CD8-positive, alpha-beta T cell (primary cell): ENCODE measurements at regions of chr7 and their contacts with region 1.

Region 1: DNA sequence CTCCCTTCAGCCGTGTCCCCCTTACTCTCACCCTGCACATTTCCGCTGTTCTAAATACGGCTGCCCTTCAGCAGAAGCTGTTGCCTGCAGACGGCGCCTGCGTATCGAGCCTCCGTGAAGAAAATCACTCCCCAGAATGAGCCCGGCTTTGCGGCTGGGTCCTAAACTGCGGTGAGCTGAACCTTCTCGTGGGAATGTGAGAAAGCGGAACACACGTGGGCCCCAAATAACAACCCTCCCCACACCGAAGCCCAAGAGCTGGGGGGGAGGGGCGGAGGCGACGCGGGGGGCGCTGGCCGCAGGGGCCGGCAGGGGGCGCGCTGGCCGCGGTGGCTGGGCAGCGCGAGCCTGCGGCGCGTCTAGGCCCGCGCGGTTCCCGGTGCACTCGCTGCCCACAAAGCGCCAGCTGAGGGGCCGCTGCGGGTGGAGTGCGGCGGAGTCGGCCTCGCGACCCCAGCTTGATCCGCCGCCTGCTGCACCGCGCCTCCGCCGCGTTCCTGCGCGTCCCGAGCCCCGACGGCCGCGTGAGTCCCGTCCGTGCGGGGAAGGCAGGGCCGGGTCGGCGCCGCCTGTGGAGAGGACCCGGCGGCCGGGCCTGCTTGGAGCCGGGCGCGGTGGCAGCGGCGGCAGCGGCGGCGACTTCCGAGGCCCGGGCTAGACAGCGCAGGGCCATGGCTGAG is at the start of gene ZNF398:
- DNase-seq: peak; percentile 69 to 92 (median 79)
- ATAC-seq: peak; percentile 78
- H3K4me3 ChIP-seq: peak within 1 kb of the TSS; percentile 66 to 100
- H3K4me3 Mint-ChIP-seq: peak within 1 kb of the TSS; percentile 89
- H3K27ac ChIP-seq: peak within 1 kb of the TSS; percentile 70 to 77
- H3K27ac Mint-ChIP-seq: peak within 1 kb of the TSS; percentile 91
- H3K4me1 ChIP-seq: peaks cover 22% of the 10 kb centered on the region
- H3K4me1 Mint-ChIP-seq: peaks cover 35% of the 10 kb centered on the region
- H3K27me3 ChIP-seq: no peaks in the 10 kb centered on the region
- H3K27me3 Mint-ChIP-seq: no peaks in the 10 kb centered on the region
- CTCF ChIP-seq: peak; percentile 55
- total RNA-seq, gene ZNF398: 12.9 to 15.1 TPM

Region 2: DNA sequence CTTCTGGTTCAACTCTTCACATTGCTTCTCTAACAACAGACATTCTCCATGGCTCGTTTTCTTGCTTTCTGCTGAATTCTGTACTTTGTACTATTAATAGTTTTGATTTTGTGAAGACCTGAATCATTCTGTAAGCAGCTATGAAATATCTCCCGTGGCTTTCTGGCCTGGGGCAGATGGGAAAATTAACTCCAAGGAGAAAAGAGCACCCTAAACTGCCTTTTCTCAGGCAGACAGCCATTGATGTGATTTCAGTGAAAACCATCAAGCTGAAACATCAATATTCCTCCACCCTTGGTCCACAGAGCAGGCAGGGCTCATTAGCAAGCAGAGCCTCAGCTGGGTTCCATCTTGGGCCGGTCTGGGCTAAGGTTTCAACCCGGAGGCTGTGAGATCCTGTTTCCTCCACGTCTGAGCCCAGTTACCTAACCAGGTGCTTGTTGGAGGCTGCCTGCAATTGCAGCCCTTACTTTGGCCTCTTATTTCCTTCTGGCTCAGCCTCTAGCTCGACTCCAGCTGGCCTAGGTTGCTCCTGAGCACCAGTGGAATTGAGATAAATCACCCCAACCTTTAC is 242.0 kb before region 1 on chr7:
- CTCF ChIA-PET with region 1: no interaction called
- POLR2A ChIA-PET with region 1: no interaction called
- intact Hi-C with region 1: no loop called
- DNase-seq: peak in 1 of 9 experiments; percentile 29
- ATAC-seq: no peak
- H3K4me3 ChIP-seq: no peak overlapping the region
- H3K4me3 Mint-ChIP-seq: no peak overlapping the region
- H3K27ac ChIP-seq: no peak overlapping the region
- H3K27ac Mint-ChIP-seq: no peak overlapping the region
- H3K4me1 ChIP-seq: no peaks in the 10 kb centered on the region
- H3K4me1 Mint-ChIP-seq: no peaks in the 10 kb centered on the region
- H3K27me3 ChIP-seq: no peaks in the 10 kb centered on the region
- H3K27me3 Mint-ChIP-seq: no peaks in the 10 kb centered on the region
- CTCF ChIP-seq: no peak

Region 3: GRCh38 chr7:148987010-148987750 is 160.0 kb before region 1 on chr7:
- CTCF ChIA-PET with region 1: no interaction called
- POLR2A ChIA-PET with region 1: no interaction called
- intact Hi-C with region 1: loop called (anchors 1 to 5 kb)
- DNase-seq: peak; percentile 43 to 93 (median 80)
- ATAC-seq: peak; percentile 76
- H3K4me3 ChIP-seq: peak overlapping the region; percentile 82 to 97
- H3K4me3 Mint-ChIP-seq: peak overlapping the region; percentile 96
- H3K27ac ChIP-seq: peak overlapping the region; percentile 74 to 93
- H3K27ac Mint-ChIP-seq: peak overlapping the region; percentile 96
- H3K4me1 ChIP-seq: peaks cover 41% of the 10 kb centered on the region
- H3K4me1 Mint-ChIP-seq: peaks cover 52% of the 10 kb centered on the region
- H3K27me3 ChIP-seq: no peaks in the 10 kb centered on the region
- H3K27me3 Mint-ChIP-seq: no peaks in the 10 kb centered on the region
- CTCF ChIP-seq: no peak

Region 4: DNA sequence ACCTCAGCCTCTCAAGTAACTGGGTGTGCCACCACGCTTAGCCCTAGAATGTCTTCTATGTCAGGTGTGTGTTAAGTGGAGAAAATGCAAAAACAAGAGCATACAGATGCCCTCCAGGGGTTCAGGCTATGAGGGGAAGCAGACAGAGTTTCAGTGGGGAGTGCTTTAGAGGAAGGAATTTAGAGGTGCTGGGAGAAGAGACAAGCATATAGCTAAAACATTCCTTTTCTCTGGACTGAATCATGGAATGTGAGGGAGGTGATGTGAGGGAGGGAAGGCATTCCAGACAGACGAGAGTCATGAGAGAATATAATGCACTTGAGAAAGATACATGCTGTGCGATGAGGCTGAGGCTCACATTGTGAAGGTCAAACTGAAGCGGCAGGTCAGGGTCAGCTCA is 50.1 kb before region 1 on chr7:
- CTCF ChIA-PET with region 1: no interaction called
- POLR2A ChIA-PET with region 1: interaction called, 3 read pairs
- intact Hi-C with region 1: loop called in 1 of 2 experiments (anchors 2 kb)
- DNase-seq: no peak
- ATAC-seq: no peak
- H3K4me3 ChIP-seq: no peak overlapping the region
- H3K4me3 Mint-ChIP-seq: no peak overlapping the region
- H3K27ac ChIP-seq: no peak overlapping the region
- H3K27ac Mint-ChIP-seq: no peak overlapping the region
- H3K4me1 ChIP-seq: no peaks in the 10 kb centered on the region
- H3K4me1 Mint-ChIP-seq: no peaks in the 10 kb centered on the region
- H3K27me3 ChIP-seq: no peaks in the 10 kb centered on the region
- H3K27me3 Mint-ChIP-seq: no peaks in the 10 kb centered on the region
- CTCF ChIP-seq: no peak

Region 5: DNA sequence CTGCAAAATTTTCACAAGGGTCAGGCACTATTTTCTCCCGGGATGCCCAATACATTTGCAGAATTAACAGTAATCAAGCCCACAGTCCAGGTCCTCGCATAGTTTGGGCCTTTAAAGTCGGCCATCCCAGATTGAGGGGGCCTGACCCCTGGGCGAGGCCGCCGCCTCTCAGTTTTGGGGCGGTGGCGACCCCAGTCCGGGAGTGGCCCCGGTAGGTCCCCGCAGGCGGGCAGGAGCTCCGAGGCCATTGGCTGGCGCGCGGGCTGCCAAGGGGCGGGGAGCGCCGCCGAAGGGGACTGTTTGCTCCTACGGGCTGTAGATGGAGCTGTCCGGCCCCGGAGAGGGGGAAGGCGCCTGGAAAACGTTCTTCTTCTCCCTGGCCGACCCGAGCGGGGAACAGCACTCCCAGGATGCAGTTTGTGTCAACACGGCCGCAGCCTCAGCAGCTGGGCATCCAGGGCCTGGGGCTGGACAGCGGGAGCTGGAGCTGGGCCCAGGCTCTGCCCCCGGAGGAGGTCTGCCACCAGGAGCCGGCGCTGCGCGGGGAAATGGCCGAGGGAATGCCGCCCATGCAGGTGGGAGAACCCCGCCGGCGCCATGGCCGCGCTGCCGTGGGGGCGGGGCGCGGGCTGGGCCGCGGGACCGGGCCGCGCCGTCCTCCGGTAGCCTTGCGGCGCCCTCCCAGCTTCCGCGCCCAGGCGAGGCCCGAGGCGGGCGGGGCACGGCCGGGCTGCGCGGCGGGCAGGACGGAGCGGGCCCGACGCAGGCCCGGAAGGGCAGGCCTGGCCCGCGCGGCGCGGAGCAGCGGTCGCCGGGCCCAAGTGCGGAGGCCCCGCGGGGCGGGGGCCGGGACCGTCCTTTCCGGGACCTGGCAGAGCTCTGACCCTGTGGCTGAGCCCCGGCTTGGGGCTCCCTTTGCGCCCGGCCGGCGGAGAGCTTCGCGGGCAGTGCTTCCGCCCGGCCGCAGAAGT is 48.3 kb after region 1 on chr7 and contains the start of gene ZNF282:
- CTCF ChIA-PET with region 1: interaction called, 3 read pairs
- POLR2A ChIA-PET with region 1: interaction called, 15 read pairs
- intact Hi-C with region 1: loop called (anchors 2 to 5 kb)
- DNase-seq: peak; percentile 31 to 80 (median 65)
- ATAC-seq: peak; percentile 78
- H3K4me3 ChIP-seq: peak within 1 kb of the TSS; percentile 83 to 84
- H3K4me3 Mint-ChIP-seq: peak within 1 kb of the TSS; percentile 86
- H3K27ac ChIP-seq: peak within 1 kb of the TSS; percentile 60 to 68
- H3K27ac Mint-ChIP-seq: peak within 1 kb of the TSS; percentile 84
- H3K4me1 ChIP-seq: peaks cover 17% of the 10 kb centered on the region
- H3K4me1 Mint-ChIP-seq: peaks cover 43% of the 10 kb centered on the region
- H3K27me3 ChIP-seq: no peaks in the 10 kb centered on the region
- H3K27me3 Mint-ChIP-seq: no peaks in the 10 kb centered on the region
- CTCF ChIP-seq: no peak
- total RNA-seq, gene ZNF282: 12.5 to 14.9 TPM

Region 6: GRCh38 chr7:149422129-149422913 is 275.1 kb after region 1 on chr7:
- CTCF ChIA-PET with region 1: no interaction called
- POLR2A ChIA-PET with region 1: no interaction called
- intact Hi-C with region 1: loop called in 1 of 2 experiments (anchors 2 kb)
- DNase-seq: peak; percentile 50 to 91 (median 66)
- ATAC-seq: peak; percentile 97
- H3K4me3 ChIP-seq: peak overlapping the region; percentile 71 to 76
- H3K4me3 Mint-ChIP-seq: peak overlapping the region; percentile 76
- H3K27ac ChIP-seq: peak overlapping the region; percentile 60 to 82
- H3K27ac Mint-ChIP-seq: peak overlapping the region; percentile 75
- H3K4me1 ChIP-seq: peaks cover 5% of the 10 kb centered on the region
- H3K4me1 Mint-ChIP-seq: peaks cover 12% of the 10 kb centered on the region
- H3K27me3 ChIP-seq: no peaks in the 10 kb centered on the region
- H3K27me3 Mint-ChIP-seq: no peaks in the 10 kb centered on the region
- CTCF ChIP-seq: no peak

Region 7: GRCh38 chr7:150722431-150722931 is 1575.3 kb after region 1 on chr7:
- CTCF ChIA-PET with region 1: no interaction called
- POLR2A ChIA-PET with region 1: no interaction called
- intact Hi-C with region 1: loop called in 1 of 2 experiments (anchors 10 kb)
- DNase-seq: peak in 1 of 9 experiments; percentile 47
- ATAC-seq: no peak
- H3K4me3 ChIP-seq: peak overlapping the region; percentile 20 to 23
- H3K4me3 Mint-ChIP-seq: peak overlapping the region; percentile 95
- H3K27ac ChIP-seq: peak overlapping the region; percentile 1 to 24
- H3K27ac Mint-ChIP-seq: peak overlapping the region; percentile 96
- H3K4me1 ChIP-seq: peaks cover 57% of the 10 kb centered on the region
- H3K4me1 Mint-ChIP-seq: peaks cover 78% of the 10 kb centered on the region
- H3K27me3 ChIP-seq: no peaks in the 10 kb centered on the region
- H3K27me3 Mint-ChIP-seq: no peaks in the 10 kb centered on the region
- CTCF ChIP-seq: no peak